Uterus (tissue), 4 donors: ENCODE measurements at regions of chr12 and their contacts with region 1.

Region 1: DNA sequence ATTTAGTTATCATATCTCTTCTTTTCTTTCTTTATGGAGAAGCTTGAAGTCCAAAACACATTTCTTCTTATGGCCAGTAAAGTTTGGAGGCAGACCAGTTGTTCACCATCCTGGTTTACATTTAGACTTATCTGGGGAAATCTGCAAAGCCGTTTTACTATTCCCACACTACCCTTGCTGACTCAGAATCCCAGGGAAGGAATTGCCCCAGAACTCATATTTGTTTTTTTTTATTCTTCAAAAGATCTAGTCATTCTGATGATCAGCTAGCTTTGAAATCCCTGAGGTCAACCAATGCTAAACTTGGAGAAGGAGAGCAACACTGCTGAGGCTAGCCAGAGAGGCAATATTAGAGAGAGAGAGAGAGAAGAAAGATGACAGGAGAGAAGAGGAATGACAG is 12.3 kb upstream of the LMO3 start:
- DNase-seq: no peak
- H3K4me3 ChIP-seq: no peak overlapping the region
- H3K27ac ChIP-seq: no peak overlapping the region
- H3K4me1 ChIP-seq: peaks cover 0 to 1% of the 10 kb centered on the region in 2 donors
- H3K27me3 ChIP-seq: no peaks in the 10 kb centered on the region
- CTCF ChIP-seq: no peak
- POLR2A ChIP-seq: no peak

Region 2: DNA sequence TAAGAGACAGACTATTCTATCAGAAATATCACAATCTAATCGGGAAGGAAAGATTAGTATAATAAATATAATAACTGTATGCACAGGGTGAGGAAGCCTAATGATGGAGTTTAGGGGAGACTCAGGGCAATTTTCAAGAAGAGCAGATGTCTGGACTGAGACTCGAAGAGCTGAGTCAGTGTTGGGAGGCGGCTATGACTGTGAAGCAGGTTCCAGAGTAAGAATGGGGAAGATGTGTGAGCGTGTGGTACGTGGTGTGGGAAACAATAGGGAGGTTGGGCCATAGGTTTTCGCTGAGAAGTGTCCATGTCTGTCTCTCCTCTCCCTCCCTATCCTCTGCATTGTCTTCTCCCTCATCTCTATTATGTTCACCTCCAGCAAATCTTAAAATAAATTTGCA is 97.9 kb before region 1 on chr12:
- intact Hi-C with region 1: loop called (anchors 5 kb)
- DNase-seq: no peak
- H3K4me3 ChIP-seq: no peak overlapping the region
- H3K27ac ChIP-seq: no peak overlapping the region
- H3K4me1 ChIP-seq: no peaks in the 10 kb centered on the region
- H3K27me3 ChIP-seq: no peaks in the 10 kb centered on the region
- CTCF ChIP-seq: no peak
- POLR2A ChIP-seq: no peak

Region 3: DNA sequence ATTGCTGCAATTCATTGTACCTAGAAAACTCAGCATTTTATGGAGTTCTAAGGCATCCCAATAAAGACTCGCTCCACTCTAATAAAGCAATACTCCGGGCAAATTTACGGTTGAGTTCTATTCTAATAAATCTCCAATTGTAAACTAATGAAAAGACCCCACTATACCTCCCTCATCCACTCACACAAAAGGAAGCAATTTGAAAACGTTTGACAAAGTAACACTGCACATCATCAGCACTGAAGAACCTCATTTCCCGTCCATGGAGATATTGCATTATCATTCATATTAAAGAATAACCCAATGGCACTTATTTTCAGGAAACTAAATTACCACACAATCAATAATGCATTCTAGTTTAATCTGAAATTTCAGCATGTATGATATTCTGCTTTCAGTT is 98.7 kb after region 1 on chr12:
- intact Hi-C with region 1: no loop called
- DNase-seq: no peak
- H3K4me3 ChIP-seq: no peak overlapping the region
- H3K27ac ChIP-seq: no peak overlapping the region
- H3K4me1 ChIP-seq: no peaks in the 10 kb centered on the region
- H3K27me3 ChIP-seq: no peaks in the 10 kb centered on the region
- CTCF ChIP-seq: no peak
- POLR2A ChIP-seq: no peak

Region 4: DNA sequence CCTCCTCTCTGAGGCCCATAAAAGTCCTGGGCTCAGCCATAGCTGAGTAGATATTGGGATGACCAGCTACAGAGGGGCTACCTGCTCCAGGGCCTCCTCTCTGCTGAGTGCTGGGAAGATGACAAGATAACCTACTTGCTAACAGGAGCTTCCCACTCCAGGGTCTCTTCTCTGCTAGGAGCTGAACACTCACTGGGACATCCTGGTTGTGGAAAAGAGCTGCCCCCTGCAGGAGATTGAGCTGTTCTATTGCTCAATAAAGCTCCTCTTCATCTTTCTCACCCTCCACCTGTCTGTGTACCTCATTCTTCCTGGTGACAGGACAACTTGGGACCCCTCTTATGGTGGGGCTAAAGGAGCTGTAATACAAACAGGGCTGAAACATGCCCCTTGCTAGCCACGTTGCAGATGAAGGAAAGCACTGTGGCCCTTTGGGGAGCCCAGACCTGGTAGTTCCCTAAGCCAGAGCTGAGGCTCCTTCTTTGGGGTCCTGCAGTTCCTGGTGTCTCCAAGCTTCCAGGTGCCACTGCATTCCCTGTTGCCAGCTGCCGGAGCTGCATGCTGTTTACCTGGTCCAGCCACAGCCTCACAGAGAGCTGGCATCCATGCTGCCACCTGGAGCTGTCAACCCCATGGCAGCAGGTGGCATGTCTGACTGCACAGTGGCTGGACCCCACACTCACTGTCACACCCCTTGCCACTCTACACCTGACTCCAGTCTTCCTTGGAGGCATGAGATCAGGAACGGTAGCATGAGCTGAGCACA is 586.2 kb after region 1 on chr12:
- intact Hi-C with region 1: no loop called
- DNase-seq: no peak
- H3K4me3 ChIP-seq: no peak overlapping the region
- H3K27ac ChIP-seq: no peak overlapping the region
- H3K4me1 ChIP-seq: no peaks in the 10 kb centered on the region
- H3K27me3 ChIP-seq: no peaks in the 10 kb centered on the region
- CTCF ChIP-seq: no peak
- POLR2A ChIP-seq: no peak